ENCODE measurements at regions of chr20 and their contacts with region 1.

Region 1: DNA sequence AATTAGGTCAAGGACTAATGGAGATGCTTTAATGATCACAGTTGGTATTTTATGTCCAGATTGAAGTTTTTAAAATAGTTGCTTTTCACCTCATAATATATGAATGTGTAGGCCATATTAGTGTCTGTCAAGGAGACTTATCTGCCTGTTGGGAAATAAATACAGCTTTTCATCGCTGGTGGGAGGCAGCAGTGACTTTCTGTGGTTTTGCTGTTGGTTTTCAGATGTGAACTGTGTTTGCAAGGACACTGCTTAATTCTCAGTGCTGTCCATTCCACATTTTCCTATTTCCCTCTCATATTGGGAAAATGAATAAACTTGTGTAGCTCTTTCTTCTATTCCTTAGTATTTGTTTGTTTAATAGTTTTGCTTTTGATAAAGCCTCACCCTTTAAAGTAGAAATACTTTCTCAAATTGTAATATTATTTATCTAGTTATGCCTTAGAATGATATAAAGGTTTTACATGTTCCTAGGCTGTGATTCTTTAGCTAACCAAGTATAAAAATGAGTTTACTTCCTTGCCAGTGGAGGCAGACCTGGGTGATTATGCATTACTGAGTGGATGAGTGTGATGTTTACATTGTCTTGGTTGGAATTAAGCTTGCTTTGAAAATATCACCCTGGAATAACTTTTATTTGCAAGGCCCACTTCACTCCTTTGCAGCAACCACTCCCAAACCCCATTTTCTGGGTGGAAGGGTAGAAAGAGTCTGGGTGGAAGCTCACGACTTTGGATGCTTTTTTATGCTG is 3.3 kb downstream of the PLCB4 start:
- DNase-seq: no peak
- H3K4me3 ChIP-seq: peak overlapping the region; percentile 94
- H3K27ac ChIP-seq: peak overlapping the region; percentile 95
- H3K4me1 ChIP-seq: peaks cover 93% of the 10 kb centered on the region
- H3K27me3 ChIP-seq: no peaks in the 10 kb centered on the region
- CTCF ChIP-seq: no peak

Region 2: GRCh38 chr20:8305449-8305978 is 766.6 kb before region 1 on chr20:
- intact Hi-C with region 1: no loop called
- DNase-seq: peak; percentile 15
- H3K4me3 ChIP-seq: no peak overlapping the region
- H3K27ac ChIP-seq: no peak overlapping the region
- H3K4me1 ChIP-seq: peaks cover 23% of the 10 kb centered on the region
- H3K27me3 ChIP-seq: no peaks in the 10 kb centered on the region
- CTCF ChIP-seq: peak; percentile 61

Region 3: GRCh38 chr20:9119776-9120175 is 47.6 kb after region 1 on chr20:
- intact Hi-C with region 1: no loop called
- DNase-seq: peak; percentile 62
- H3K4me3 ChIP-seq: peak overlapping the region; percentile 32
- H3K27ac ChIP-seq: peak overlapping the region; percentile 79
- H3K4me1 ChIP-seq: peaks cover 20% of the 10 kb centered on the region
- H3K27me3 ChIP-seq: no peaks in the 10 kb centered on the region
- CTCF ChIP-seq: no peak

Region 4: GRCh38 chr20:9344083-9344920 is 272.2 kb after region 1 on chr20:
- intact Hi-C with region 1: loop called (anchors 10 kb)
- DNase-seq: no peak
- H3K4me3 ChIP-seq: peak overlapping the region; percentile 13
- H3K27ac ChIP-seq: peak overlapping the region; percentile 74
- H3K4me1 ChIP-seq: peaks cover 53% of the 10 kb centered on the region
- H3K27me3 ChIP-seq: no peaks in the 10 kb centered on the region
- CTCF ChIP-seq: no peak